Activated CD4-positive, alpha-beta memory T cell treated with anti-CD3 and anti-CD28 coated beads, Interleukin-2, amount 10 ng/mL, durations not matched to agents 7 days and 5 days (primary cell): ENCODE measurements at regions of chr6 and their contacts with region 1.

Region 1: DNA sequence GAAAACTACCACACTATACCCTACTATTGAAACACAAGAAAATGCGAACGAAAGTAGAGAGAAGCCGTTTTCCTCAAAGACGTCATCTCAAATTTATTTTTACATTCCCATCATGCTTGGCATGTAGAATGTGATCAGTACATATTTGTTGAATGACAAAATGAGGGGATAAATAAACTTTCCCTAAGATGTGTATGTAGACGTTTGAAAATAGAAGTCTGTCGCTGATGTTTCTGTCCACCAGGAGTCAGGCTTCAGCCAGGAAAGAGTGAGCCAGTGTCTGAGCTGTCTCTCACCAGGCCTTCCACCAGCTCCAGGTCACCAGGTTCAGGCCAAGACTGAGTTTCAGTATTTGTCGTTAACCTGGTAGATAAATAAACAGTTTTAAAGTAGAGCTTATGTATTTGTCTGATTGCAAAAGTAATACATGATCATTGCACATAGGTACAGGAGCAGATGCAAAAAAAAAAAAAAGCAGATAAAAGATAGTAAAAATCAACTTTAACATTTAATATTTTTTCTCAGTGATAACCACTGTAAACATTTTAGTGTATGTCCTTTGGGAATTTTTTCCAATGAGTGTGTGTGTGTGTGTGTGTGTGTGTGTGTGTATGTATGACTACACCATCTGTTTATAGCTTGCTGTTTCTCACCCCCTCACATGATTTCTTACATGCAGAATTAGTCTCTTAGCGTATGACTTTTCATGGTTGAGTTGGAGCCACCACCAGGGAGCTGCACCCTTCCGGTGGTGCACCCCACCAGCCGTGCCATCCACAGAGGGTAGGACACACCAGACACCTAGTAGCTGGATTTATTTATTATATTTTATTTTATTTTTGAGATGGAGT is 26.2 kb downstream of the WRNIP1 start:
- DNase-seq: peak; percentile 71
- H3K4me3 Mint-ChIP-seq: no peak overlapping the region
- H3K27ac Mint-ChIP-seq: peak overlapping the region; percentile 57
- H3K4me1 Mint-ChIP-seq: peaks cover 41% of the 10 kb centered on the region
- H3K27me3 Mint-ChIP-seq: no peaks in the 10 kb centered on the region

Region 2: DNA sequence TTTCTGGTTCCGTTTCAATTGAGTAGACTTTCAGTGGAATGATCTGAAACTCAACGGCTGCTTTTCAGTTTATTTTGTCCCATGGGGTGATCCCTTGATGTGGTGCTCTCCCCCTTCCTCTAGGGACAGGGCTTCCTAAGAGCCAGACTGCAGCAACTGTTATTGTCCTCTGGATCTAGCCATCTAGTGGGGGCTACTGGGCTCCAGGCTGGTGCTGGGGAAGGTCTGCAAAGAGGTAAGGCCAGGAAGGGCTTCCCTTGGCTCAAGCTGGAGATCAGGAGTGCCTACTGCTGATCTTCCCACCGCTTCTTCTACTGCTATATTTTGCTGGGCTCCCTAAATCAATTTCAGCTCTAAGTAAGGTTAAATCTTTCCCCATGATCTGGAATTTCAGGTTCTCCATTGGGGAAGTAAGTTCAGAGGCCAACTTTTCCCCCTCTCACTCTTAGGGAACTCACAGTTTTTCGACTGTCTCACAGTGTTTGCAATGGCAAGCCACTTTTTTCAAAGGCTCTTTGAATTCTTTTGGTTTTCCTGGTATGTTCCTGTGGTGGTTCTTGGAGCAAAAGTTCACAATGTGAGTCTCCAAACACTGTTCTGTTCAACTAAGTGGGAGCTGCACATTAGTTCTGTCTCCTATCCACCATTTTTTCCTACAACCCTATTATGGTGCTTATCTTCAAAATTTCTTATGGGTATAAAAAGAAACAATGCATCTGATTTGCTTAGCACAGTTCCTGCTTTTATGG is 1812.2 kb before region 1 on chr6:
- CTCF ChIA-PET with region 1: no interaction called
- POLR2A ChIA-PET with region 1: no interaction called
- DNase-seq: no peak
- H3K4me3 Mint-ChIP-seq: no peak overlapping the region
- H3K27ac Mint-ChIP-seq: no peak overlapping the region
- H3K4me1 Mint-ChIP-seq: no peaks in the 10 kb centered on the region
- H3K27me3 Mint-ChIP-seq: peaks cover 17% of the 10 kb centered on the region

Region 3: GRCh38 chr6:2765166-2765895 is 26.0 kb before region 1 on chr6 and contains the start of gene WRNIP1:
- CTCF ChIA-PET with region 1: interaction called, 11 read pairs
- POLR2A ChIA-PET with region 1: interaction called, 7 read pairs
- DNase-seq: peak; percentile 98
- H3K4me3 Mint-ChIP-seq: peak within 1 kb of the TSS; percentile 90
- H3K27ac Mint-ChIP-seq: peak within 1 kb of the TSS; percentile 96
- H3K4me1 Mint-ChIP-seq: peaks cover 50% of the 10 kb centered on the region
- H3K27me3 Mint-ChIP-seq: no peaks in the 10 kb centered on the region
- total RNA-seq, gene WRNIP1: 39.6 to 42.1 TPM

Region 4: GRCh38 chr6:2911171-2911570 is 119.8 kb after region 1 on chr6:
- CTCF ChIA-PET with region 1: interaction called, 12 read pairs
- POLR2A ChIA-PET with region 1: no interaction called
- DNase-seq: no peak
- H3K4me3 Mint-ChIP-seq: no peak overlapping the region
- H3K27ac Mint-ChIP-seq: no peak overlapping the region
- H3K4me1 Mint-ChIP-seq: peaks cover 22% of the 10 kb centered on the region
- H3K27me3 Mint-ChIP-seq: no peaks in the 10 kb centered on the region

Region 5: GRCh38 chr6:2931970-2932748 is 140.8 kb after region 1 on chr6:
- CTCF ChIA-PET with region 1: interaction called, 37 read pairs
- POLR2A ChIA-PET with region 1: no interaction called
- DNase-seq: peak; percentile 88
- H3K4me3 Mint-ChIP-seq: no peak overlapping the region
- H3K27ac Mint-ChIP-seq: no peak overlapping the region
- H3K4me1 Mint-ChIP-seq: peaks cover 23% of the 10 kb centered on the region
- H3K27me3 Mint-ChIP-seq: peaks cover 20% of the 10 kb centered on the region

Region 6: GRCh38 chr6:2940010-2940850 is 148.9 kb after region 1 on chr6:
- CTCF ChIA-PET with region 1: interaction called, 20 read pairs
- POLR2A ChIA-PET with region 1: no interaction called
- DNase-seq: peak; percentile 81
- H3K4me3 Mint-ChIP-seq: peak overlapping the region; percentile 69
- H3K27ac Mint-ChIP-seq: peak overlapping the region; percentile 94
- H3K4me1 Mint-ChIP-seq: peaks cover 57% of the 10 kb centered on the region
- H3K27me3 Mint-ChIP-seq: peaks cover 31% of the 10 kb centered on the region

Region 7: GRCh38 chr6:2952557-2953095 is 161.3 kb after region 1 on chr6:
- CTCF ChIA-PET with region 1: interaction called, 10 read pairs
- POLR2A ChIA-PET with region 1: no interaction called
- DNase-seq: peak; percentile 48
- H3K4me3 Mint-ChIP-seq: no peak overlapping the region
- H3K27ac Mint-ChIP-seq: no peak overlapping the region
- H3K4me1 Mint-ChIP-seq: no peaks in the 10 kb centered on the region
- H3K27me3 Mint-ChIP-seq: peaks cover 13% of the 10 kb centered on the region